ENCODE measurements at regions of chr22 and their contacts with region 1.

Region 1: GRCh38 chr22:39520054-39520891 is at the start of gene ATF4:
- DNase-seq: peak; percentile 97 to 99
- ATAC-seq: peak; percentile 77 to 86
- H3K4me3 ChIP-seq: peak within 1 kb of the TSS; percentile 88 to 100 (median 99)
- H3K27ac ChIP-seq: peak within 1 kb of the TSS; percentile 95 to 100 (median 100)
- H3K4me1 ChIP-seq: peaks cover 50 to 53% of the 10 kb centered on the region in 2 donors
- H3K27me3 ChIP-seq: no peaks in the 10 kb centered on the region
- CTCF ChIP-seq: peak in 2 of 5 experiments; percentile 13 to 33
- POLR2A ChIP-seq: peak; percentile 98
- total RNA-seq, gene ATF4: 480 to 666 (median 533) TPM

Region 2: GRCh38 chr22:38755911-38756532 is 764.3 kb before region 1 on chr22 and contains the start of gene SUN2:
- in situ Hi-C with region 1: no loop called
- intact Hi-C with region 1: loop called (anchors 10 kb)
- DNase-seq: peak; percentile 89 to 94
- ATAC-seq: peak; percentile 76 to 81
- H3K4me3 ChIP-seq: peak within 1 kb of the TSS; percentile 55 to 93 (median 74)
- H3K27ac ChIP-seq: peak within 1 kb of the TSS; percentile 93 to 100 (median 96)
- H3K4me1 ChIP-seq: peaks cover 34 to 38% of the 10 kb centered on the region in 2 donors
- H3K27me3 ChIP-seq: no peaks in the 10 kb centered on the region
- CTCF ChIP-seq: no peak
- POLR2A ChIP-seq: peak; percentile 89 to 94
- total RNA-seq, gene SUN2: 177 to 423 (median 312) TPM

Region 3: DNA sequence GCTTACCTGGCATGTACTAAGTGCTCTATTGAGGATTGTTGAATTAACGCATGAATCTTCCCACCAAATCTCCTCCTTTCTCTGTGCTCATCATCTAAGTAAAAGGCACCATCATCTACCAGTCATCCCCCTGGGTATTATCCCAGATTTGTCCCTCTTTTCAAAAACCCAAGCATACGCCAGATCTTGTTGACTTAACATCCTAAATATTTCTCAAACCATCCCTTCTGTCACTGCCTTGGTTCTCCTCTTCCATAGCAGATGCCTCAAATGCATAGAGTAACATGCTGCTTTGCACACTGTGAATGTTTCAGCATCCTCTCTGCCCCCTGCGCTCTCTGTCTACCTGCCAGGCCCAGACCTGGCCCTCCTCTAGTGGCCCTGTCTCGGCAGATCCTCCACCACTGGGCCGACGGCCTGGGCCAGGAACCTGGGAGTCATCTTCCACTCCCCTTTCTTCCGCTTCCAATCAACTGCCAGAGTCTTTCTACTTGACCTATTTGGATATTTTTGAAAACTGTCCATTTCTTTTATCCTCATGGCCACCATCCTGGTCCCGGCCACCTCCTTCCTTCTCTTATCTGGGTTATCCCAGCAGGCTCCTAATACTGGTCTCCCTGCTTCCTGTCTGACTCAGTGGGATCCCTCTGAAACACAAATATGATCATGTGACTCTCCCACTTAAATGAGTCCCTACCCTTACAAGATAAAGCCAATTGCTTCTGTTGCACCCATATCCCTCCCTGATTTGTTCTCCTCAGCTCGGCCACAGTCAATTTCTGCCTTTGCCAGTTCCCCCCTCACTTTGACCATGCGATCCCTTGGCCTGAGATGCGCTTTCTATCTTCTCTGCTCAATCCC is 124.1 kb before region 1 on chr22:
- in situ Hi-C with region 1: loop called in 1 of 4 experiments (anchors 10 kb)
- intact Hi-C with region 1: loop called (anchors 5 kb)
- DNase-seq: no peak
- ATAC-seq: no peak
- H3K4me3 ChIP-seq: no peak overlapping the region
- H3K27ac ChIP-seq: no peak overlapping the region
- H3K4me1 ChIP-seq: peaks cover 10% of the 10 kb centered on the region in 2 donors
- H3K27me3 ChIP-seq: no peaks in the 10 kb centered on the region
- CTCF ChIP-seq: no peak
- POLR2A ChIP-seq: no peak

Region 4: GRCh38 chr22:39502109-39502788 is 18.0 kb before region 1 on chr22 and contains the start of gene MIEF1:
- in situ Hi-C with region 1: no loop called
- intact Hi-C with region 1: loop called (anchors 1 kb)
- DNase-seq: peak; percentile 97 to 98
- ATAC-seq: peak; percentile 95 to 97
- H3K4me3 ChIP-seq: peak within 1 kb of the TSS; percentile 89 to 94 (median 90)
- H3K27ac ChIP-seq: peak within 1 kb of the TSS; percentile 85 to 95 (median 90)
- H3K4me1 ChIP-seq: peaks cover 29 to 35% of the 10 kb centered on the region in 2 donors
- H3K27me3 ChIP-seq: no peaks in the 10 kb centered on the region
- CTCF ChIP-seq: no peak
- POLR2A ChIP-seq: peak; percentile 47 to 76
- total RNA-seq, gene MIEF1: 11.4 to 25.4 (median 12.9) TPM

Region 5: DNA sequence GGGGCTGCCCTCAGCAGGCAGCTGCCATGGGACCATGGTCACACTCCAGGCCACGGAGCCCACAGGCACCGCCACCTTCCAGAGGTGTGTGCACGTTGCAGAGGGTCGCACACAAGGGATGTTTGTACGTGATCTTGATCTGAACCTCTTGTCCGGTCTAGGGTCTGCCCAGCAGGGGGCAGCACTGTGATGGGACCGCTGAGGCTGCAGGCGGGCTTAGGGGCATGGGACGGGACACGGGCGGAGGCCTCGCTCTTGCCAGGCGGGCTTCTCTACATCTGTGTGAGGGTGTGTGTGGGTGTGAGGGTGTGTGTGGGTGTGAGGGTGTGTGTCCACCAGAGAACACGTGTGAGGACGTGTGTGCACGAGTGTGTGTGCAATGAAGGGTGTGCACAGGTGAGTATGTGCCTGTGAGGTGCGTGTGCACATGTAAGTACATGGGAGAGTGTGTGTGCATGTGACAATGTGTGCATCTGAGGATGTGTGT is 102.7 kb after region 1 on chr22:
- in situ Hi-C with region 1: no loop called
- intact Hi-C with region 1: no loop called
- DNase-seq: peak; percentile 31 to 47
- ATAC-seq: peak; percentile 58 to 75
- H3K4me3 ChIP-seq: no peak overlapping the region
- H3K27ac ChIP-seq: no peak overlapping the region
- H3K4me1 ChIP-seq: no peaks in the 10 kb centered on the region
- H3K27me3 ChIP-seq: peaks cover 22 to 55% (median 23%) of the 10 kb centered on the region in 3 donors
- CTCF ChIP-seq: peak; percentile 46 to 72 (median 63)
- POLR2A ChIP-seq: no peak

Region 6: GRCh38 chr22:40636380-40637182 is 1116.3 kb after region 1 on chr22 and contains the start of gene MRTFA:
- in situ Hi-C with region 1: no loop called
- intact Hi-C with region 1: loop called (anchors 10 kb)
- DNase-seq: peak; percentile 100
- ATAC-seq: peak; percentile 96
- H3K4me3 ChIP-seq: peak within 1 kb of the TSS; percentile 72 to 96 (median 75)
- H3K27ac ChIP-seq: peak within 1 kb of the TSS; percentile 90 to 96 (median 92)
- H3K4me1 ChIP-seq: peaks cover 29 to 31% of the 10 kb centered on the region in 2 donors
- H3K27me3 ChIP-seq: no peaks in the 10 kb centered on the region
- CTCF ChIP-seq: no peak
- POLR2A ChIP-seq: peak; percentile 98 to 99
- total RNA-seq, gene MRTFA: 13.7 to 31.3 (median 22.2) TPM